GM13976 (cell line): ENCODE measurements at regions of chr2 and their contacts with region 1.

Region 1: GRCh38 chr2:153519257-153519875 is 40.8 kb upstream of the RPRM start:
- DNase-seq: peak; percentile 36
- CTCF ChIP-seq: peak; percentile 50

Region 2: GRCh38 chr2:152925547-152926327 is 593.6 kb before region 1 on chr2:
- in situ Hi-C with region 1: loop called (anchors 25 kb)
- DNase-seq: peak; percentile 36
- CTCF ChIP-seq: peak; percentile 87

Region 3: DNA sequence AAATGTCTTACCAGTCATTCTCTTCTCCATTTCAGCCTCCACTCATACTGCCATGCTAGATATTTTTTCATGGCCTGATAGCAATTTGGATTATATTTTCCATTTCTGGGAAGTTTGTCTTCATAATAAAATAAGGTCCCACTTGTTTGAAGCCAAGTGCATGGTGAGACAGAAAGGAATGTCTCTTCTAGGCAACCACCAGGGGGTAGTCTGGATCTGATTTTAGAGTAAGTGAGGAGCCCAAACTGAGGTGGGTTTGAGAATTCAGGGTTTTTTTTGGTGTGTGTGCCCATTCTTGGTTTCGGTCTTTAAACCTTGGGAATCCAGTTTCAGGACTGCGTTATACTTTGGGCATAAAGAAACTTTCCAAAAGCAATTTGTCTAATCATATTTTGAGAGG is 356.3 kb before region 1 on chr2:
- in situ Hi-C with region 1: loop called (anchors 25 kb)
- DNase-seq: peak; percentile 28
- CTCF ChIP-seq: peak; percentile 26

Region 4: DNA sequence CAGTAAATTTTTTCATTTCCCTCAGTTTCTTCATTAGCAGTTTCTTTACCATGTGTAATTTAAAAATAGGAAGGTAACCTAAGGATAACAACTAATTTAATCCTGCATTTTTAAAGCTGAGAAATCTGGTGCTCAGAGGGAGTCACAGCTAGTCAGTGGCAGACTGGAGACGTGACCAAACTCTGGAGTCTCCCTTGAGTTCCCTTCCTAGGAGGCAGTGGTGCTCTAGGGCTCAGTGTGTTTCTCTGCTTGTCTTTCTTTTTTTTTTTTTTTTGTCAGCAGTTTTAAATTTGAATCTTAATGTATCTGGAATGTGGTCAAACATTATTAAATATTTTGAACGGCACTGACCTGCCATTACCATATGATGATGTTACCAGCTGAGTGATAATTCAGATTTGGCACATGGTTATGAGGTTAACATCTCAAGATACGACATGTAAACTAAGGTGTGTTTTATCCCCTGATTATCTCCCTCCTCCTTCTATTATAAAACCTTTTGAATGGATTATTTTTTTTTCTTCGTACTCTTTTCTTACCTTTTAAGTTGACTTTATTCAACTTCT is 578.5 kb after region 1 on chr2:
- in situ Hi-C with region 1: no loop called
- DNase-seq: no peak
- CTCF ChIP-seq: no peak